Head of caudate nucleus (tissue), 42 donors: ENCODE measurements at regions of chr1 and their contacts with region 1.

Region 1: DNA sequence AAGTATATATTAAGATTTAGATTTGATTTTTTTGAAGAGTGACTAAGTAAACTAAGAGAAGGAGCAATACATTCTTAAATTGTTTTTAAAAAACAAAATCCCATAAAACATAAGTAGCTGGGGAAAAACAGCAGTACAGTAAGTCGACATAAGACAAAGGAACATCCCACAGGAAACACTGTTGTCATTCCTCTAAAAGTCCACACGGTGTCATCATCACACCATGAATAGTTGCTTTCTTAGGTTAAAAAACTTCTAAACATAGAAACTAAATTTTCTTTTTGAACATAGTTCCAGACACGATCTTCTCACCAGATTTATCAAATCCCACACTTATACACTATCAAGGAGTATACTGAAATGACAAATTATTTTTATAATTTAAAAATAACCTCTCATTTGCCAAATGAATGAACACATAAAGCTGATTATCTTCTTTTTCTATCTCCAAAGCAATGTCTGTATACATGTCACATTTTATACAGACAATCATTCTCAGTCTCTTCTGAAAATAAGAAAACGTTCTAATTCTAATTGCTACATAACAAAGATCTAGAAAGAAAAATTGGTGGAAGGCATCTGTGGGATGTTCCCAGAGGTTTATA is 15.8 kb downstream of the ODF2L start:
- DNase-seq: peak in 6 of 42 donors; percentile 7 to 54 (median 15)

Region 2: DNA sequence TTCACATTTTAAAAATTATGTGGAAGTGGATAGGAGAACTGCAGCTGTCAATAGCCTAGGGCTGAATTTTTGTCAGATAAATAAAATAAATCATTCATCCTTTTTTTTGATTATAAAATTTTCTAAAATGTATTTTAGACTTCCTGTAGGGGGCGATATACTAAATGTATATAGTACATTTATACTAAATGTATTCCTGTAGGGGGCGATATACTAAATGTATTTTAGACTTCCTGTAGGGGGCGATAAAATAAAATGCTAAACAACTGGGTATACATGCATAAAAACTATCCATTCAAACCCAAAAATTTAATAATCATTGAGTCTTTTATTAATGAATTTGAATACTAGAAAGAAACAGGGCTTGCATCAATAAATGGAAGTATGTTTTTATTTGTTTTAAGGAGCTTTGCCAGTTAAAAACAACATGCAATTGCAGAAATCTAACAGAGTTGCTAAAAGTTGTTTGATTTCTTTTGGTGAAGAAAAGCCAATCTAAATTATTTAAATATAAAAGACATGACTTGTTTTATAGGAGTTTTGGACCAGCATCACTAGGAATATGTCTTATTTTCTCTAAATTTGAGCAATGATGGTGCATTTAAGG is 119.7 kb after region 1 on chr1:
- intact Hi-C with region 1: loop called (anchors 10 kb)
- DNase-seq: no peak